Naive thymus-derived CD4-positive, alpha-beta T cell (primary cell): ENCODE measurements at regions of chr17 and their contacts with region 1.

Region 1: GRCh38 chr17:43940630-43941029 is 1.6 kb downstream of the PPY start:
- DNase-seq: no peak
- ATAC-seq: no peak
- H3K4me3 ChIP-seq: no peak overlapping the region
- H3K4me3 Mint-ChIP-seq: no peak overlapping the region
- H3K27ac ChIP-seq: no peak overlapping the region
- H3K27ac Mint-ChIP-seq: no peak overlapping the region
- H3K4me1 ChIP-seq: peaks cover 0 to 3% of the 10 kb centered on the region in 2 donors
- H3K4me1 Mint-ChIP-seq: peaks cover 0 to 22% (median 11%) of the 10 kb centered on the region in 7 donors
- H3K27me3 ChIP-seq: no peaks in the 10 kb centered on the region
- H3K27me3 Mint-ChIP-seq: peaks cover 0 to 22% (median 0%) of the 10 kb centered on the region in 5 donors

Region 2: DNA sequence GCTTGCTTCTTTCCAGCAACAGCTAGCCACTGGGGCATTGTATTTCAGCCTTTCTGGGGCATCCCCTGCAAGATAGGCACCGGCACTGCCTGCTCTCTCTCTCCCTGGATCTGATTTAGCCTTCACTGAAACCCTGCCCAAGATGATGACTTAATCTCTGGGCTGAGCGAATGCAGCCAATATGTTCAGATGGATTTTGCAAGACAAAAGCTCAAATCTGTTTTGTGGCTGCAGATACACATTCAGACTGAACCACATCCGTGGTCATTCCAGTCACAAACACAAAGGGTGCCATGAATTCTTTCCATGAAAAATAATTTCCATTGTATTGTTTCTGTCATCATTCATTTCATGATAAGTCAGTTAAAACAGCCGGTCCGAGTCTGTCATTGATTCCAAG is 206.3 kb before region 1 on chr17:
- CTCF ChIA-PET with region 1: no interaction called
- POLR2A ChIA-PET with region 1: no interaction called
- intact Hi-C with region 1: no loop called
- DNase-seq: no peak
- ATAC-seq: no peak
- H3K4me3 ChIP-seq: no peak overlapping the region
- H3K4me3 Mint-ChIP-seq: no peak overlapping the region
- H3K27ac ChIP-seq: no peak overlapping the region
- H3K27ac Mint-ChIP-seq: no peak overlapping the region
- H3K4me1 ChIP-seq: no peaks in the 10 kb centered on the region
- H3K4me1 Mint-ChIP-seq: no peaks in the 10 kb centered on the region
- H3K27me3 ChIP-seq: no peaks in the 10 kb centered on the region
- H3K27me3 Mint-ChIP-seq: peaks cover 7 to 25% (median 8%) of the 10 kb centered on the region in 5 donors

Region 3: GRCh38 chr17:43917348-43918018 is 23.1 kb before region 1 on chr17:
- CTCF ChIA-PET with region 1: interaction called, 12 read pairs
- POLR2A ChIA-PET with region 1: no interaction called
- intact Hi-C with region 1: loop called in 1 of 2 experiments (anchors 1 kb)
- DNase-seq: peak; percentile 34 to 56 (median 46)
- ATAC-seq: peak; percentile 85
- H3K4me3 ChIP-seq: peak overlapping the region; percentile 65
- H3K4me3 Mint-ChIP-seq: peak overlapping the region; percentile 72 to 89 (median 83)
- H3K27ac ChIP-seq: peak overlapping the region; percentile 65
- H3K27ac Mint-ChIP-seq: peak overlapping the region; percentile 6 to 84 (median 68)
- H3K4me1 ChIP-seq: peaks cover 0 to 9% of the 10 kb centered on the region in 2 donors
- H3K4me1 Mint-ChIP-seq: peaks cover 10 to 28% (median 17%) of the 10 kb centered on the region in 7 donors
- H3K27me3 ChIP-seq: no peaks in the 10 kb centered on the region
- H3K27me3 Mint-ChIP-seq: peaks cover 0 to 11% (median 0%) of the 10 kb centered on the region in 5 donors

Region 4: DNA sequence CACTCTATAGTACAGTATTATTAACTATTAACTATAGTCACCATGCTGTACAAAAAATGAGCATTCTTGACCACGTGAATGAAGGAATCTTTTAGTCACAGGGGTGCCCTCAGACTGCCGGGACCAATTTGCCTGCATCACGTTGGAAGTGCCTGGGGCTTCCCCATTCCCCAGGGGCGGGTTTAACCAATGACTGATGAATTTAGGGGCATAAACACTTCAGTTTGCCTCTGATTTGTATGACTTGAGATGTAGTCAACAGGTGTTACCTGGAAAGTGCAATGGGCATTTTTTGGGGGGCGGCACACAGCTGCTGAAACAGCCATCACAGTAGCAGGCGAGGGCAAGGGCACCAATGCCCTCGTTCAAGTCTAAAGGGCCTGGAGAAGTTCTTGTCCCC is 21.8 kb after region 1 on chr17:
- CTCF ChIA-PET with region 1: no interaction called
- POLR2A ChIA-PET with region 1: no interaction called
- intact Hi-C with region 1: no loop called
- DNase-seq: no peak
- ATAC-seq: no peak
- H3K4me3 ChIP-seq: no peak overlapping the region
- H3K4me3 Mint-ChIP-seq: no peak overlapping the region
- H3K27ac ChIP-seq: no peak overlapping the region
- H3K27ac Mint-ChIP-seq: no peak overlapping the region
- H3K4me1 ChIP-seq: no peaks in the 10 kb centered on the region
- H3K4me1 Mint-ChIP-seq: no peaks in the 10 kb centered on the region
- H3K27me3 ChIP-seq: no peaks in the 10 kb centered on the region
- H3K27me3 Mint-ChIP-seq: peaks cover 0 to 36% (median 5%) of the 10 kb centered on the region in 5 donors

Region 5: DNA sequence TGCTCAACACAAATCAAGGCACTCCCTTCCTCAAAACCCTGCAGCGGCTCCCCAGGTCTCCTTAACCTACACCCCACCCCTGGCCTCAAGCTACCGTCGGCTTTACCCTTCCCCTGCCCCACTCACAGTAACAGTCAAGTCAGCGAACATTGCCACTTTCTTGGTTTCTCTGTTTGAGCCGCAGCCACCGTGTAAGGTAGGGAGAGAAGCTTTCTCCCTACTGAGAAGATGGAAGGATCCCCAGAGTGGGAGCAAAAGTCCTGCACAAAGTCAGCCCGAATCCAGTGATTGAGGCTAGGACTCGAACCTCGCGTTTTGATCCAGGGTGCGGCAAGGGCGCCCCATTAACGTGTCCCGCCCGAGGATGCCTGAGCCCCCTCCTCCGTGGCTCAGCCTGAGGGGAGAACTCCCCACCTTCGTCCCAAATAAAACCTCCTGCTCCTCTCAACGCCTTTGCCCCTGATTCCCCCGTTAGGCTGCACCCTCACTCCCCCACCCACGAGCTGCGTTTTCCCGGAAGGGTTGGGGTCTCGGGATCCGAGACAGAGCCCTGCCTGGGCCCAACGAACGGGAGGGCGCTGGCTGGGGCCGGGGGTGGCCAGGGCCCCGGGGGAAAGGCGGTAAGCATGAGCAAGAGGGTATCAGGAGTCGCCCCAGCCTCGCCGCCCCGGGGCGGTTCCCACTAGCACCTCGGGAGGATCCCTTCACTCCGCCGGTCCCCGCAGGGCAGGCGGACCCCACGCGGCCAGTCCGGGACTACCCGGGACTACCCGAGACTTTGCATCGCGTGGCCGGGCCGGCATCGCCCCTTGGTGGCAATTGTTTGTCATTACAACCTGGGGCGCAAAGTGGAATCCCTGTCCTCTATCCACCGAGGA is 53.9 kb after region 1 on chr17:
- CTCF ChIA-PET with region 1: no interaction called
- POLR2A ChIA-PET with region 1: no interaction called
- intact Hi-C with region 1: loop called (anchors 1 kb)
- DNase-seq: peak; percentile 40 to 74 (median 63)
- ATAC-seq: peak; percentile 94
- H3K4me3 ChIP-seq: peak overlapping the region; percentile 7
- H3K4me3 Mint-ChIP-seq: peak overlapping the region in 5 of 10 donors; percentile 11 to 59 (median 31)
- H3K27ac ChIP-seq: no peak overlapping the region
- H3K27ac Mint-ChIP-seq: no peak overlapping the region
- H3K4me1 ChIP-seq: peaks cover 6 to 9% of the 10 kb centered on the region in 2 donors
- H3K4me1 Mint-ChIP-seq: no peaks in the 10 kb centered on the region
- H3K27me3 ChIP-seq: peaks cover 3 to 4% of the 10 kb centered on the region in 2 donors
- H3K27me3 Mint-ChIP-seq: peaks cover 0 to 35% (median 13%) of the 10 kb centered on the region in 5 donors

Region 6: DNA sequence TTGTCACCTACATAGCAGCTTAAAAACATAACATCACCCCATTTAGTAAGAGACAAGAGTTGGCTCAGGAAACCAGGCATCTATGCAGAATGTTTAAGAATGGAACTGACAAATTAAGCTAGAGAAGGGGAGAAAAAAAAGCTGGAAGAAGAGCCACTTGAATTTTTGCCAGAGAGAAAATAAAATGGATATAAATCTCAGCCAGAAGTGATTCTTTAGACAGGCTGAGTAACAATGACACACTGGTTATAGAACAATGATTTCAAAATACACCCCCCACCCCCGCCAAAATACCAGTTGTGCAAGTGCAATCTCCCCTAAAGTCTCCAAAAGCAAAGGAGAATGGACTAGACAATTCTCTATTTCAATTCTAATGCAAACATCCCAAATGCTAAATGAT is 103.4 kb after region 1 on chr17:
- CTCF ChIA-PET with region 1: interaction called, 59 read pairs
- POLR2A ChIA-PET with region 1: interaction called, 5 read pairs
- intact Hi-C with region 1: loop called (anchors 1 kb)
- DNase-seq: no peak
- ATAC-seq: no peak
- H3K4me3 ChIP-seq: no peak overlapping the region
- H3K4me3 Mint-ChIP-seq: no peak overlapping the region
- H3K27ac ChIP-seq: no peak overlapping the region
- H3K27ac Mint-ChIP-seq: peak overlapping the region in 5 of 9 donors; percentile 2 to 52 (median 7)
- H3K4me1 ChIP-seq: peaks cover 0 to 5% of the 10 kb centered on the region in 2 donors
- H3K4me1 Mint-ChIP-seq: peaks cover 14 to 27% (median 19%) of the 10 kb centered on the region in 7 donors
- H3K27me3 ChIP-seq: no peaks in the 10 kb centered on the region
- H3K27me3 Mint-ChIP-seq: no peaks in the 10 kb centered on the region

Region 7: DNA sequence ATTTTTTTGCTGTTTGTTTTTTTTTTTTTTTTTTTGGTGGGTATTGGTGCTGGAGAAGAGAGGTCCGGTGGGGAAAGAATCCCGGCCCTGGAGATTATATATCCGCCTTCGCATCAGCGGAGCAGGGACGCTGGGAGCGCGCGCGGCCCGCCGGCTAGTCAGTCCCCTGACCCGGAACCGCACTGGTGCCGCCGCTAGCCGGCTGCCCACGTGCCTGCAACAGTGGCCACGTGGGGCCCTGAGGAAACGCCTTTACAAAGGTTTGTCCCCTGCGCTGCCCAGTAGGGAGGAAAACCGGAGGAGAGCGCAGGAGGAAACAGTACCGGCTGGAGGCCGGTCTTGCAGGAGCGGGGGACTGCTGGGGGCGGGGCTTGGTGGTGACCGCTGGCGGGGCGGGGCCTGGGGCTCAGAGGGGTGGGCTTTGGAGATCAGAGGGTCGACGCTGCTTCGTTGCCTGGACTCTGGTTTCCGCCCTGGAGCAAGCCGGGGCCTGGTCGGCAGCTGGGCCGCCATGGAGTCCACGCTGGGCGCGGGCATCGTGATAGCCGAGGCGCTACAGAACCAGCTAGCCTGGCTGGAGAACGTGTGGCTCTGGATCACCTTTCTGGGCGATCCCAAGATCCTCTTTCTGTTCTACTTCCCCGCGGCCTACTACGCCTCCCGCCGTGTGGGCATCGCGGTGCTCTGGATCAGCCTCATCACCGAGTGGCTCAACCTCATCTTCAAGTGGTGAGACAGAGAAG is 130.0 kb after region 1 on chr17 and contains the start of gene G6PC3:
- CTCF ChIA-PET with region 1: no interaction called
- POLR2A ChIA-PET with region 1: no interaction called
- intact Hi-C with region 1: no loop called
- DNase-seq: peak; percentile 35 to 86 (median 49)
- ATAC-seq: peak; percentile 67
- H3K4me3 ChIP-seq: peak within 1 kb of the TSS; percentile 75
- H3K4me3 Mint-ChIP-seq: peak within 1 kb of the TSS; percentile 91 to 97 (median 94)
- H3K27ac ChIP-seq: peak within 1 kb of the TSS; percentile 83
- H3K27ac Mint-ChIP-seq: peak within 1 kb of the TSS; percentile 29 to 96 (median 93)
- H3K4me1 ChIP-seq: peaks cover 21 to 24% of the 10 kb centered on the region in 2 donors
- H3K4me1 Mint-ChIP-seq: peaks cover 31 to 49% (median 36%) of the 10 kb centered on the region in 7 donors
- H3K27me3 ChIP-seq: no peaks in the 10 kb centered on the region
- H3K27me3 Mint-ChIP-seq: no peaks in the 10 kb centered on the region
- total RNA-seq, gene G6PC3: 9.4 to 25.8 (median 13.9) TPM

Region 8: DNA sequence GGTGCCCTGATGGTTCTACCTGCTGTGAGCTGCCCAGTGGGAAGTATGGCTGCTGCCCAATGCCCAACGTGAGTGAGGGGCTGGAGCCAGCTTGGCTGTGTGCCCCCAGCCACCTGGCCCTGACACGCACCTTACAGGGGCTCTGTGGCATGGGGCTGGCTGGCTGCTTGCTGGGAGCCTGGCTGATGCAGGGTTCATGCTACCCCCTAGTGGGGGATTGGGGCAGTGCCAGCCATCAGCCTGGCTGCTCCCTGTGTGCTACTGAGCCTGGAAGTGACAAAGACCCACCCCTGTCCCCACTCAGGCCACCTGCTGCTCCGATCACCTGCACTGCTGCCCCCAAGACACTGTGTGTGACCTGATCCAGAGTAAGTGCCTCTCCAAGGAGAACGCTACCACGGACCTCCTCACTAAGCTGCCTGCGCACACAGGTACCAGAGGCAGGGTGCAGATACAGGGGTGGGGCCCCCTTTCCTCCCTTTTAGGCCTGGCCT is 410.1 kb after region 1 on chr17:
- CTCF ChIA-PET with region 1: interaction called, 3 read pairs
- POLR2A ChIA-PET with region 1: no interaction called
- intact Hi-C with region 1: loop called in 1 of 2 experiments (anchors 1 kb)
- DNase-seq: peak; percentile 49 to 76 (median 70)
- ATAC-seq: peak; percentile 72
- H3K4me3 ChIP-seq: no peak overlapping the region
- H3K4me3 Mint-ChIP-seq: peak overlapping the region in 1 of 10 donors; percentile 17
- H3K27ac ChIP-seq: no peak overlapping the region
- H3K27ac Mint-ChIP-seq: no peak overlapping the region
- H3K4me1 ChIP-seq: peaks cover 4 to 6% of the 10 kb centered on the region in 2 donors
- H3K4me1 Mint-ChIP-seq: peaks cover 5 to 18% (median 12%) of the 10 kb centered on the region in 7 donors
- H3K27me3 ChIP-seq: no peaks in the 10 kb centered on the region
- H3K27me3 Mint-ChIP-seq: peaks cover 0 to 10% (median 0%) of the 10 kb centered on the region in 5 donors

Region 9: GRCh38 chr17:45677770-45678169 is 1737.1 kb after region 1 on chr17:
- CTCF ChIA-PET with region 1: no interaction called
- POLR2A ChIA-PET with region 1: no interaction called
- intact Hi-C with region 1: no loop called
- DNase-seq: no peak
- ATAC-seq: no peak
- H3K4me3 ChIP-seq: no peak overlapping the region
- H3K4me3 Mint-ChIP-seq: no peak overlapping the region
- H3K27ac ChIP-seq: no peak overlapping the region
- H3K27ac Mint-ChIP-seq: no peak overlapping the region
- H3K4me1 ChIP-seq: no peaks in the 10 kb centered on the region
- H3K4me1 Mint-ChIP-seq: no peaks in the 10 kb centered on the region
- H3K27me3 ChIP-seq: no peaks in the 10 kb centered on the region
- H3K27me3 Mint-ChIP-seq: peaks cover 4 to 19% (median 10%) of the 10 kb centered on the region in 5 donors